ENCODE measurements at regions of chr14 and their contacts with region 1.

Region 1: GRCh38 chr14:51780006-51780692 is 80.3 kb upstream of the GNG2 start:
- DNase-seq: peak; percentile 59
- ATAC-seq: peak; percentile 73
- H3K4me3 ChIP-seq: no peak overlapping the region
- H3K27ac ChIP-seq: no peak overlapping the region
- H3K4me1 ChIP-seq: peaks cover 2% of the 10 kb centered on the region; the same call in 1 of the 2 replicates
- H3K27me3 ChIP-seq: no peaks in the 10 kb centered on the region
- CTCF ChIP-seq: peak; percentile 71
- POLR2A ChIP-seq: no peak
- RAD21 ChIP-seq: peak; percentile 84

Region 2: GRCh38 chr14:51554953-51555352 is 225.2 kb before region 1 on chr14:
- CTCF ChIA-PET with region 1: interaction called, 3 read pairs
- POLR2A ChIA-PET with region 1: no interaction called
- dilution Hi-C with region 1: no loop called
- in situ Hi-C with region 1: loop called (anchors 10 kb)
- intact Hi-C with region 1: no loop called
- DNase-seq: peak; percentile 72
- ATAC-seq: peak; percentile 36
- H3K4me3 ChIP-seq: peak overlapping the region; percentile 19; the same call in 1 of the 2 replicates
- H3K27ac ChIP-seq: peak overlapping the region; percentile 89
- H3K4me1 ChIP-seq: peaks cover 20% of the 10 kb centered on the region
- H3K27me3 ChIP-seq: no peaks in the 10 kb centered on the region
- CTCF ChIP-seq: peak; percentile 33
- POLR2A ChIP-seq: no peak
- RAD21 ChIP-seq: peak; percentile 53

Region 3: DNA sequence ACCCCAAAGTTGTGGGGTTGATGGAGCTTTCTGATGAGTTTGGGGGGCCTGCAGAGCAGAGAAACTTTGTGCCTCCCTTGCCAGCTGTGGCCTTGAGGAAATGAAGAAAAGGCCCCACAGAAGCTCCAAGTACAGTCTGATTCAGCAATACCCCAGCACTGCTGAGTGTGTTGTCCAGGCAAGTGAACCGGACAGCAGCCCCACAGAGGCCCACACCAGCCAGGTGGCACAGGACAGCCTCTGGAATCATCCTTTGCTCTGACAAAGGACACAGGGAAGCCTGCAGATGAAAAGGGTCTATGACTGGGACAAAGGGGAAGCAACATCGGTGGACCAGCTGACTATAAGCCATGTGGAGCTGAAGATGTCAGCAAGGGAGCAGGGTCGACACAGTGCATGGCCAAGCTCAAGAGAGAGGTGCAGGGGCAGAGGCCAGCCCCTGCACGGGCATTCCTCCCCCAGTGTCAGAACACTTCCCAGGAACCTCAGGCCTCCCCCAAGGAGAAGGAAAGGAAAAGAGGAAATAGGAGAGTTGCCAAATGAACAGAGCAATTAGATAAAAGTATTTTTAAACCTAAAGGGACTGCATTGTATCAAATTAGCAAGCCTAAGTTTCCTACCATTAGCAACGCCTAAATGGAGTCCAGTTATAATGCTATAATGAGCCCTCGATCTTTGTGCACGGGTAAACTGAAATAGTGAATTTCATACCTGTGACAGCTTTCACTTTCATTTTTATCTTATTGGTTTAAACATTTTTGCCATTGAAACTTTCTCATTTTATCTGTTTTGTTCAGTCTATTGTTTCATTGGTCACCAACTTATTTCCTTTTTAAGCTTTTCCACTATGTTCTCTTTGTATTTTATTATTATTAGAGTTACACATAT is 441.0 kb after region 1 on chr14:
- CTCF ChIA-PET with region 1: no interaction called
- POLR2A ChIA-PET with region 1: no interaction called
- dilution Hi-C with region 1: no loop called
- in situ Hi-C with region 1: no loop called
- intact Hi-C with region 1: no loop called
- DNase-seq: no peak
- ATAC-seq: no peak
- H3K4me3 ChIP-seq: no peak overlapping the region
- H3K27ac ChIP-seq: no peak overlapping the region
- H3K4me1 ChIP-seq: peaks cover 3% of the 10 kb centered on the region; the same call in 1 of the 2 replicates
- H3K27me3 ChIP-seq: peaks cover 6% of the 10 kb centered on the region
- CTCF ChIP-seq: no peak
- POLR2A ChIP-seq: no peak
- RAD21 ChIP-seq: no peak